CD8-positive, alpha-beta memory T cell (primary cell): ENCODE measurements at regions of chr6 and their contacts with region 1.

Region 1: DNA sequence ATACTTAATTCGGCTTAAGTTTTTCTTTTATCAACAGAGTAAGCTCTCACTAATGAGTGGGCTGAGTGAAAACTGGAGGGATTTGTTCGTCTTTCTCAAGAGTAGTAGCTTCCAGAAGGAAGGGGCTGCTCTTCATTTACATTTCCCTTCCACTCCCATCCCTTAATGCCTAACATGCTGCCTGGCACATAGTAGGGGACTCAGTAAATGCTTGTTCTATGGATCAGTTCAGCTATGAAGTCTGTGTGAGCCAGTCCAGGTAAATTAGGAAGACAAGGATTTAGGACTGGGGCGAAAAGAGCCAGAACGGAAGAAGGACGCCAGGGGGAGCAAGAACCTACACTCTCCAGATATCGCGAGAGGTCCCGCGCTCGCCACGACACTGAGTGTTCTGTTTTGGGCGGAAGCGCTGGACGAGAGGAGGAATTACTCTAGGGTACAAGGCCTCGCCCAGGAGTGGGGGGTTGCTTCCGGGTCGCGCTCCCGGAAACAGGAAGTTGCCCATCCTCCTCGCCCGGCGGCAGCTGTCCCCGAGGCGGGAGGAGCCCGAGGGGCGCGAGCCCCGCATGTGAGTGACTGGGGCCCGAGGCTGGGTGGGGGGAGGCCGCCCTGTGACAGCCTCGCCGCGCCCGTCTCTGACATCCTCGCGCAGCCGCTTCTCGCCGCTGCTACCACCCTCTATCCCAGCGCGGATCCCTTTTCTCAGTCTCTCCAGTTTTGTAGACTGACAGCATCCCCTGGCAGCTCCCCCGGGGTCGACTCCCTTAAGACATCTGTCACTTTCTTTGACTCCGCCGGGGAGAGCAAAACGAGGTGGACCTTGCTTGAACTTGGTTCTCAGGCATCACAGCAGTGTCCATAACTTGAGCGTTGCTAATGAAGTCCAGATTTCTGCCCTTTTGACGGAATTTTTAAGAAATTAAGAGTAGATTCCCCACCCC is at the start of gene C6orf89:
- DNase-seq: peak; percentile 95 to 99 (median 97)
- H3K4me3 ChIP-seq: peak within 1 kb of the TSS; percentile 72
- H3K4me3 Mint-ChIP-seq: peak within 1 kb of the TSS; percentile 79 to 96 (median 91)
- H3K27ac ChIP-seq: peak within 1 kb of the TSS; percentile 82
- H3K27ac Mint-ChIP-seq: peak within 1 kb of the TSS; percentile 84 to 97 (median 96)
- H3K4me1 ChIP-seq: peaks cover 34% of the 10 kb centered on the region
- H3K4me1 Mint-ChIP-seq: peaks cover 32 to 50% (median 50%) of the 10 kb centered on the region in 3 donors
- H3K27me3 ChIP-seq: no peaks in the 10 kb centered on the region
- H3K27me3 Mint-ChIP-seq: no peaks in the 10 kb centered on the region
- total RNA-seq, gene C6orf89: 37.4 to 40.0 TPM

Region 2: GRCh38 chr6:36777801-36778200 is 107.9 kb before region 1 on chr6:
- CTCF ChIA-PET with region 1: no interaction called
- POLR2A ChIA-PET with region 1: no interaction called
- DNase-seq: no peak
- H3K4me3 ChIP-seq: no peak overlapping the region
- H3K4me3 Mint-ChIP-seq: no peak overlapping the region
- H3K27ac ChIP-seq: no peak overlapping the region
- H3K27ac Mint-ChIP-seq: no peak overlapping the region
- H3K4me1 ChIP-seq: peaks cover 4% of the 10 kb centered on the region
- H3K4me1 Mint-ChIP-seq: peaks cover 4 to 8% (median 4%) of the 10 kb centered on the region in 3 donors
- H3K27me3 ChIP-seq: peaks cover 4% of the 10 kb centered on the region
- H3K27me3 Mint-ChIP-seq: peaks cover 0 to 4% of the 10 kb centered on the region in 2 donors

Region 3: GRCh38 chr6:36874443-36875249 is 11.1 kb before region 1 on chr6 and contains the start of gene PPIL1:
- CTCF ChIA-PET with region 1: interaction called, 63 read pairs
- POLR2A ChIA-PET with region 1: interaction called, 21 read pairs
- DNase-seq: peak; percentile 76 to 92 (median 89)
- H3K4me3 ChIP-seq: peak within 1 kb of the TSS; percentile 87
- H3K4me3 Mint-ChIP-seq: peak within 1 kb of the TSS; percentile 96 to 100 (median 100)
- H3K27ac ChIP-seq: peak within 1 kb of the TSS; percentile 89
- H3K27ac Mint-ChIP-seq: peak within 1 kb of the TSS; percentile 94 to 100 (median 99)
- H3K4me1 ChIP-seq: peaks cover 24% of the 10 kb centered on the region
- H3K4me1 Mint-ChIP-seq: peaks cover 34 to 45% (median 37%) of the 10 kb centered on the region in 3 donors
- H3K27me3 ChIP-seq: peaks cover 3% of the 10 kb centered on the region
- H3K27me3 Mint-ChIP-seq: peaks cover 13 to 23% of the 10 kb centered on the region in 2 donors
- total RNA-seq, gene PPIL1: 66.6 to 68.8 TPM

Region 4: GRCh38 chr6:36985808-36986703 is 100.3 kb after region 1 on chr6 and contains the start of gene MTCH1:
- CTCF ChIA-PET with region 1: interaction called, 19 read pairs
- POLR2A ChIA-PET with region 1: interaction called, 13 read pairs
- DNase-seq: peak; percentile 84 to 92 (median 90)
- H3K4me3 ChIP-seq: peak within 1 kb of the TSS; percentile 91
- H3K4me3 Mint-ChIP-seq: peak within 1 kb of the TSS in 5 of 7 donors; percentile 90 to 99 (median 97)
- H3K27ac ChIP-seq: peak within 1 kb of the TSS; percentile 82
- H3K27ac Mint-ChIP-seq: peak within 1 kb of the TSS; percentile 87 to 99 (median 97)
- H3K4me1 ChIP-seq: peaks cover 37% of the 10 kb centered on the region
- H3K4me1 Mint-ChIP-seq: peaks cover 20 to 28% (median 22%) of the 10 kb centered on the region in 3 donors
- H3K27me3 ChIP-seq: no peaks in the 10 kb centered on the region
- H3K27me3 Mint-ChIP-seq: peaks cover 0 to 11% of the 10 kb centered on the region in 2 donors
- total RNA-seq, gene MTCH1: 116 to 126 TPM

Region 5: DNA sequence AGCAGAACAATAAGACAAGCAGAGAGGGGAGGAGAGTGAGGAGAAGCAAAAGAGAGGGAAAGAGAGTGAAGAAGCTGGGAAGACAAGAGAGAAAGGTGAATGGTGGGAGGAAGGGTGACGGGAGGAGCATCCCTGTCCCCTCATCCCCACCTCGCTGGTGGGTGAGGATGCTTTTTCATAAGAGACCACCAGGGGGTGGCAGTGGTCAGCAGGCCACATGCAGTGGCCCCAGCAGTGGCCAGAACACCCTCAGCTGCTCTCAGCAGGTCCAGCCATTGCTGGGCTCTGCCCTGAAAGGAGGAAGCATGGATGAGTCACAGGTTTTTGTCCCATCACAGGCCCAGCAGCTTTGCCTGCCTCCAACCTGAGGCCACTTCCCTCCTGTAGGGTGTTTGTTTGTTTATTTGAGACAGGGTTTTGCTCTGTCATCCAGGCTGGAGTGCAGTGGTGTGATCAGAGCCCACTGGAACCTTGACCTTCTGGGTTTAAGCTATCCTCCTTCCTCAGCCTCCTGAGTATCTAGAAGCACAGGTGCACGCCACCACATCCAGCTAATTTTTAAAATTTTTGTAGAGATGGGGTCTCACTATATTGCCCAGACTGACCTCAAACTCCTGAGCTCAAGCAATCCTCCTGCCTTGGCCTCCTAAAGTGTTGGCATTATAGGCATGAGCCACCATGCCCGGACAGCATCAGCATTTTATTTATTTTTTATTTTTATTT is 143.7 kb after region 1 on chr6:
- CTCF ChIA-PET with region 1: interaction called, 13 read pairs
- POLR2A ChIA-PET with region 1: no interaction called
- DNase-seq: peak in 4 of 5 donors; percentile 30 to 62 (median 42)
- H3K4me3 ChIP-seq: no peak overlapping the region
- H3K4me3 Mint-ChIP-seq: peak overlapping the region in 1 of 7 donors; percentile 1
- H3K27ac ChIP-seq: no peak overlapping the region
- H3K27ac Mint-ChIP-seq: peak overlapping the region in 6 of 8 donors; percentile 43 to 90 (median 70)
- H3K4me1 ChIP-seq: peaks cover 6% of the 10 kb centered on the region
- H3K4me1 Mint-ChIP-seq: peaks cover 23 to 33% (median 26%) of the 10 kb centered on the region in 3 donors
- H3K27me3 ChIP-seq: no peaks in the 10 kb centered on the region
- H3K27me3 Mint-ChIP-seq: no peaks in the 10 kb centered on the region

Region 6: GRCh38 chr6:37207903-37208456 is 322.2 kb after region 1 on chr6:
- CTCF ChIA-PET with region 1: interaction called, 27 read pairs
- POLR2A ChIA-PET with region 1: no interaction called
- DNase-seq: peak; percentile 79 to 92 (median 80)
- H3K4me3 ChIP-seq: no peak overlapping the region
- H3K4me3 Mint-ChIP-seq: peak overlapping the region in 5 of 7 donors; percentile 20 to 90 (median 51)
- H3K27ac ChIP-seq: no peak overlapping the region
- H3K27ac Mint-ChIP-seq: peak overlapping the region in 7 of 8 donors; percentile 41 to 95 (median 76)
- H3K4me1 ChIP-seq: peaks cover 50% of the 10 kb centered on the region
- H3K4me1 Mint-ChIP-seq: peaks cover 49 to 60% (median 59%) of the 10 kb centered on the region in 3 donors
- H3K27me3 ChIP-seq: no peaks in the 10 kb centered on the region
- H3K27me3 Mint-ChIP-seq: no peaks in the 10 kb centered on the region